H1 (cell line): ENCODE measurements at regions of chr3 and their contacts with region 1.

Region 1: GRCh38 chr3:169744366-169745054 is 20.4 kb downstream of the TERC start:
- DNase-seq: no peak
- H3K4me3 ChIP-seq: no peak overlapping the region
- H3K27ac ChIP-seq: no peak overlapping the region
- H3K4me1 ChIP-seq: peaks cover 0 to 5% (median 0%) of the 10 kb centered on the region in 4 experiments; a peak in 2 of 7 replicates
- H3K27me3 ChIP-seq: peaks cover 0 to 1% (median 0%) of the 10 kb centered on the region in 4 experiments; a peak in 1 of 7 replicates
- CTCF ChIP-seq: peak in 1 of 3 experiments; percentile 19; a peak in 1 of 4 replicates
- EP300 ChIP-seq: no peak
- POLR2A ChIP-seq: no peak
- RAD21 ChIP-seq: peak; percentile 71 to 82

Region 2: DNA sequence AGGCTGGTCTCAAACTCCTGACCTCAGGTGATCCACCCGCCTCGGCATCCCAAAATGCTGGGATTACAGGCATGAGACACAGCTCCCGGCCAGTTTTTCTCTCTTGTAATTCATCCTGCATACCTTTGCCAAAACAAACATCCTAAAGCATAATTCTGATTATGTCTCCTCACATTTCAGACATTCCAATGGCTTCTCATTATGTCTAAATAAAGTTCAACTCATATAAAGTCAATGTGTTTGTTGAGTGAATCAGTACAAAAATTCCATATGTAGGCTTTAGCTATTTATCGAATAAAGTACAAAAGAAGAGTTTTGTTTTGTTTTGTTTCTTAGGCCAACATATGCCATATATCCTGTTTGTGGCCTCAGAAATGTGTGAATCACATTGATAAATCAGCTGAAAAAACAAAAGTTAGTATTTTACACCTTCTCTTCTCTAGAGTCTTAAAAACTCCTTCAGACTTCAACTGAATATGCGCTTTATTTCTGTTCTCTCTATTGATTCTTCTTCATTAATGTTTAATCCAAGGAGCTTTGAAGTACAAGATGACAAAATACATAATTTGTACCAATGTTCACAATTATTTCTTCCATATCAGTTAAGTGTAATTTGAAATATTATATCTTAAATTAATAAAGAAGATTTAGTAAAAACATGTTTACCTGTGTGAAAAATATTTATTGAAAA is 246.8 kb before region 1 on chr3:
- CTCF ChIA-PET with region 1: no interaction called
- POLR2A ChIA-PET with region 1: no interaction called
- DNase-seq: no peak
- H3K4me3 ChIP-seq: no peak overlapping the region
- H3K27ac ChIP-seq: no peak overlapping the region
- H3K4me1 ChIP-seq: no peaks in the 10 kb centered on the region
- H3K27me3 ChIP-seq: no peaks in the 10 kb centered on the region
- CTCF ChIP-seq: no peak
- EP300 ChIP-seq: no peak
- POLR2A ChIP-seq: no peak
- RAD21 ChIP-seq: no peak

Region 3: DNA sequence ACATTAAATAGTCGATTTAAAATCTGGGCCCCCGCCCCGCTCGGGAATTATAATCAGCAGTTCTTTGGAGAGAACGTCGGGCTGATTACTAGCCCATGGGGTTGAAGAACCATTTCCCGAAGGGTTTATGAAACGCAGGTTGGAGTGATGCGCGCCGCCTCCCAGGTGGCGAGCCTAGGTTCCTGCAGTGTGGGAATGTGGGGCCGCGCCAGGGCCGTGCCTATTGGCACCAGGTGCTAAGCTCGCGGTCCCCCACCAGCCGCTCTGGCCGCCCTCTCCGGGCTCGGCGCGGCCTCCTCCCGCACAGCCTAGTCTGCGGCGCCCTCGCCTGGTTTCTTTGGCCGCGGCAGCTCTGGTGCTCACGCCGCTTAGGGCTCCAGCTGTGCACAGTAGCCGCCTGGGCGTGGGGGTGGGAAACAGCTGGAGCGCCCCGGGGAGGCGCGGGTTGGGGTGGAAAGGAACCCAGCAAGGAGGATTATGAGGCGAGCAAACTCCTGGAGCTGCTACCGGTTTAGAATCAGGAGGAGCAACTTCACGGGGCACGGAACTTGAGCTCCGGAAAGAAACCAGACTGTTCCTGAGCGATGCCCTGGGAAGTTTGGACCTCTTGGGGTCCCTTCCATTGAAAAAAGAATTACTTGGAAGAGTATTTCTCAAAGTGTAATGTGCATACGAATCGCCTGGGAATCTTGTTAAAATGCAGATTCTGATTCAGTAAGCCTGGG is 75.4 kb before region 1 on chr3:
- CTCF ChIA-PET with region 1: interaction called, 31 read pairs
- POLR2A ChIA-PET with region 1: no interaction called
- DNase-seq: peak in 1 of 2 experiments; percentile 87
- H3K4me3 ChIP-seq: peak overlapping the region; percentile 42 to 69 (median 58); a peak in 7 of 8 replicates
- H3K27ac ChIP-seq: no peak overlapping the region
- H3K4me1 ChIP-seq: peaks cover 11 to 25% (median 22%) of the 10 kb centered on the region in 4 experiments
- H3K27me3 ChIP-seq: peaks cover 35 to 55% (median 50%) of the 10 kb centered on the region in 4 experiments
- CTCF ChIP-seq: peak; percentile 76 to 88 (median 80)
- EP300 ChIP-seq: peak in 1 of 2 experiments; percentile 65; a peak in 1 of 3 replicates
- POLR2A ChIP-seq: no peak
- RAD21 ChIP-seq: peak; percentile 94 to 98

Region 4: GRCh38 chr3:169764452-169765274 is 20.2 kb after region 1 on chr3 and contains the start of gene TERC:
- CTCF ChIA-PET with region 1: interaction called, 13 read pairs
- POLR2A ChIA-PET with region 1: no interaction called
- DNase-seq: peak; percentile 78 to 82
- H3K4me3 ChIP-seq: peak within 1 kb of the TSS; percentile 65 to 83 (median 79)
- H3K27ac ChIP-seq: peak within 1 kb of the TSS; percentile 86
- H3K4me1 ChIP-seq: peaks cover 0 to 2% (median 0%) of the 10 kb centered on the region in 4 experiments; a peak in 3 of 7 replicates
- H3K27me3 ChIP-seq: no peaks in the 10 kb centered on the region
- CTCF ChIP-seq: no peak
- EP300 ChIP-seq: no peak
- POLR2A ChIP-seq: peak; percentile 97 to 99
- RAD21 ChIP-seq: no peak
- total RNA-seq, gene TERC: 14.0 and 17.0 TPM in 2 replicates